Thyroid gland (tissue), 4 donors: ENCODE measurements at regions of chr3 and their contacts with region 1.

Region 1: DNA sequence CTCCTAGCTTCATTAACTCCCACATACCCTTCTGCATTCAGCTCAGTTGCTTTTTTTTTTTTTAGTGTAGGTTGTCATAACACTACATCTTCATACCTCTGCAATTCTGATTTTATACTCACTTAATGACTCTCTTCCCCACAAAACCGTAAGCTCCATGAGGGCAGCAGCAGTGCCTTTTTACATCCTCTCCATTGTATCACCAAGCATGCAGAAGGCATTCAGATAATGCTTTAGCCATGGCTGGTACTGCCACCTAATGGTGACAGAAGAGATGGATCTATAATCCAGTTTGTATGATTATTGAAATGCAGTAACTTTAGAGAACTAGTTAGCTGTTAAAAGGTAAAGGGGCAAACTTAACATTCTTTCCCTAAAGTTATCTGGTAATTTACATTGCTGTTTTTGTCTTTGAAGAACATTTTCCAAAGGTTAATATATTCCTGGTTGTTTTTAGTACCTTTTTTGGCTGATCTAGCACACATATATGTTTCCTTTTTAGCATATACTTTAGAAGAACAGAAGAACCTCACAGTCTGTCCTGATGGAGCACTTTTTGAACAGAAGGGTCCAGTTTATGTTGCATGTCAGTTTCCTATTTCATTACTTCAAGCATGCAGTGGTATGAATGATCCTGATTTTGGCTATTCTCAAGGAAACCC is 36.8 kb downstream of the ATP1B3 start:
- DNase-seq: peak; percentile 21 to 40
- H3K4me3 ChIP-seq: no peak overlapping the region
- H3K27ac ChIP-seq: no peak overlapping the region
- H3K4me1 ChIP-seq: no peaks in the 10 kb centered on the region
- H3K27me3 ChIP-seq: no peaks in the 10 kb centered on the region
- CTCF ChIP-seq: peak; percentile 29 to 70 (median 60)
- POLR2A ChIP-seq: no peak

Region 2: GRCh38 chr3:141656810-141657209 is 256.5 kb before region 1 on chr3:
- intact Hi-C with region 1: no loop called
- DNase-seq: no peak
- H3K4me3 ChIP-seq: no peak overlapping the region
- H3K27ac ChIP-seq: no peak overlapping the region
- H3K4me1 ChIP-seq: peaks cover 5 to 11% of the 10 kb centered on the region in 2 donors
- H3K27me3 ChIP-seq: no peaks in the 10 kb centered on the region
- CTCF ChIP-seq: no peak
- POLR2A ChIP-seq: no peak

Region 3: GRCh38 chr3:141738022-141738890 is 175.0 kb before region 1 on chr3 and contains the start of gene RNF7:
- intact Hi-C with region 1: loop called (anchors 10 kb)
- DNase-seq: peak; percentile 94
- H3K4me3 ChIP-seq: peak within 1 kb of the TSS; percentile 92 to 96 (median 95)
- H3K27ac ChIP-seq: peak within 1 kb of the TSS; percentile 96 to 97 (median 97)
- H3K4me1 ChIP-seq: peaks cover 20 to 24% of the 10 kb centered on the region in 2 donors
- H3K27me3 ChIP-seq: no peaks in the 10 kb centered on the region
- CTCF ChIP-seq: peak; percentile 63 to 99 (median 92)
- POLR2A ChIP-seq: peak in 1 of 2 donors; percentile 90
- total RNA-seq, gene RNF7: 56.5 to 114 (median 79.1) TPM